ENCODE measurements at regions of chr6 and their contacts with region 1.

Region 1: GRCh38 chr6:14216946-14217684 is 99.5 kb downstream of the CD83 start:
- DNase-seq: peak; percentile 99
- H3K4me3 ChIP-seq: no peak overlapping the region
- H3K27me3 ChIP-seq: no peaks in the 10 kb centered on the region
- CTCF ChIP-seq: no peak

Region 2: DNA sequence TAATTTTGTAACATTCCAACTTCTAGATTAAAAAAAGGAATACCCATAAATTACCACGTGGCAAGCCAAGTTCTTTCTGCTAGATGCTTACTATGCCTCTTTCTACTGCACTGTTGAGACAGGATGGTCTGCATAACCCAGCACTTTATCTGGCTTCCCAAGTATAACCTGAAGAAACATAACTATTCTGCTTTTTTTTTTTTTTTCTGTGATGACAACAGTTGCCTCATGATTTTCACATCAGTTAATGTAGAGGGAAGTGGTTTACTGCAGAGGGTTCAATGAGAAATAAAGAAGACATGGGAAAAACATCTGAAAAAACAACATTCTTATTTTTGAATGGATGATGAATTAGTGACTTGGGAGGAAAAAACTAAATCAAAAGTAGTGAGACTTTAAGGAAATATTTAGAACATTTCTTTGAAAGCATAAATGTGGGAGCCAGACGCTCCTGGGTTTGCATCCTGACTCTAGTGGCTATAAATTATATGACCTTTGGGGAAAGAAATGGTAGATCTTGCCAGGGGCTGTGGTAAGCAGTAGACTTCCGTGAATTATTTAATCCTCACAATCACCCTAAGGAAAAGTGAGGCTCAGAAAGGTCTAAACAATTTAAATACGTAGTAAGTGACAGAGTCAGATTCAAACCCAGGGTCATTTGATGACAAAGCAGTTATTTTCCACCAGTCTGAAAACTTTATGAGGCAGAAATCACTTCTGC is 1269.8 kb before region 1 on chr6:
- CTCF ChIA-PET with region 1: no interaction called
- POLR2A ChIA-PET with region 1: no interaction called
- DNase-seq: peak; percentile 44
- H3K4me3 ChIP-seq: no peak overlapping the region
- H3K27me3 ChIP-seq: no peaks in the 10 kb centered on the region
- CTCF ChIP-seq: no peak

Region 3: GRCh38 chr6:15148356-15148946 is 931.3 kb after region 1 on chr6:
- CTCF ChIA-PET with region 1: no interaction called
- POLR2A ChIA-PET with region 1: interaction called, 14 read pairs
- DNase-seq: peak; percentile 25
- H3K4me3 ChIP-seq: no peak overlapping the region
- H3K27me3 ChIP-seq: no peaks in the 10 kb centered on the region; the same call in 1 of the 2 replicates
- CTCF ChIP-seq: no peak